Activated T-helper 1 cell treated with anti-CD3 and anti-CD28 coated beads, Interleukin-12 subunit alpha, Interleukin-12 subunit beta, Interleukin-2, Interleukin-4 antibody, amounts not matched to agents 30 ng/mL and 10 ng/mL and 1 ng/mL, durations not matched to agents 14 hours and 24 hours and 36 hours (primary cell): ENCODE measurements at regions of chr12 and their contacts with region 1.

Region 1: DNA sequence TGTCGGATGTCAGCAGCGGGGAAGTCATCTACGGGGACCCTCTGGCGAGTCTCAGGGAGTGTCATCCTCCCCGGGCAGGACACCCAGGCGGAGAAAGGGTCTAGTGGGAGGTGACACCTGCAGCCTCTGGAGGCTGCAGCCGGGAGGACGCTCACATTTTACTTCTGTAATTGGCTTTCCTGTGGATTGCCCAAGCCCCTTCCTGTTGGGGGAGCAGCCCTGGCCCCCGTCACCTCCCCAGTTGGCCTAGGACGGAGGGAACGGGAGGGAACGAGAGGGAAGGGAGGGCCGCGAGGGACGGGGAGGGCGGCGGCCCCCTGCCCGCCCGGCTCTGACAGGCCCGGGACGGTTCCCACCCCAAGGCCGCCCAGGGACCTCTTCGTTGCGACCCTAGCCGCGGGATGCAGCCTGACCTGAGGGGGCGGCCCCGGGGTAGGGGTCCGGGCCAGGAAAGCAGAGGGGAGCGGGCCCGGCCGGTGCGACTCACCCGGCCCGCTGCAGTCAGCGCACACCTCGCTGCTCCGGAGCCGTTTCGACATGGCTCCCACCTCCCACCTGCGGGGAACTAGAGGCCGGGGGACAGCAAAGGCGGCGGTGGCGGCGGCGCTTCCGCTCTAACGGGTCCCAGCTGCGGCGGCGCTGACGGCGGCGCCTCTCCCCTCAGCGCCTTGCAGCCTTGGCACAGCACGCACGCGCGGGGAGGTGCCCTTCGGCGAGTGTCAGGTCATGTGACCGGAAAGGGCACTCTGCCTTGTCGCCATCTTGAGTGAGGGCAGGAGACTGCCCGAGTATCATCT is at the start of gene GIT2:
- DNase-seq: peak; percentile 95
- H3K4me3 Mint-ChIP-seq: peak within 1 kb of the TSS; percentile 99
- H3K27ac Mint-ChIP-seq: peak within 1 kb of the TSS; percentile 96
- H3K4me1 Mint-ChIP-seq: peaks cover 72% of the 10 kb centered on the region
- H3K27me3 Mint-ChIP-seq: no peaks in the 10 kb centered on the region
- total RNA-seq, gene GIT2: 86.2 and 87.5 TPM in 2 replicates

Region 2: GRCh38 chr12:109880016-109880931 is 115.6 kb before region 1 on chr12 and contains the start of gene GLTP:
- intact Hi-C with region 1: loop called (anchors 1 kb)
- DNase-seq: peak; percentile 91
- H3K4me3 Mint-ChIP-seq: peak within 1 kb of the TSS; percentile 95
- H3K27ac Mint-ChIP-seq: peak within 1 kb of the TSS; percentile 87
- H3K4me1 Mint-ChIP-seq: peaks cover 29% of the 10 kb centered on the region
- H3K27me3 Mint-ChIP-seq: peaks cover 10% of the 10 kb centered on the region
- total RNA-seq, gene GLTP: 27.7 and 29.1 TPM in 2 replicates

Region 3: DNA sequence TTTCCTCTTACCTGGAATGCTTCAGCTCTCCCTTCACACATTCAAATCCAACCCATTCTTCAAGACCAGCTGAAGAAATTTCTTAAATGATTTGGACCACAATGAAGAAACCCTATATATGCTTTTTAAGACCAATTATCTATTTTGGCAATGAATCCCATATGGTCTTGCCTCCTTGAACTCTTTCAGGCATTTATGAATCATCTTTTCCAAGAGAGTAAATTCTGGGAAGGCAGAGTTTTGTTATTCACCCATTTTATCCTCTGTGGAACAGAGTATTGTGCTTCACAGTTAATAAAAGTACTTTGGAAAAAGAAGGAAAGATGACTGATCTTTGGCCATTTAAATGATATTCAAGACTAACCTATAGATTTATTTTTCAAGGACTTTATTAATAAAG is 13.7 kb before region 1 on chr12:
- intact Hi-C with region 1: loop called (anchors 1 kb)
- DNase-seq: no peak
- H3K4me3 Mint-ChIP-seq: peak overlapping the region; percentile 16
- H3K27ac Mint-ChIP-seq: peak overlapping the region; percentile 74
- H3K4me1 Mint-ChIP-seq: peaks cover 51% of the 10 kb centered on the region
- H3K27me3 Mint-ChIP-seq: no peaks in the 10 kb centered on the region

Region 4: DNA sequence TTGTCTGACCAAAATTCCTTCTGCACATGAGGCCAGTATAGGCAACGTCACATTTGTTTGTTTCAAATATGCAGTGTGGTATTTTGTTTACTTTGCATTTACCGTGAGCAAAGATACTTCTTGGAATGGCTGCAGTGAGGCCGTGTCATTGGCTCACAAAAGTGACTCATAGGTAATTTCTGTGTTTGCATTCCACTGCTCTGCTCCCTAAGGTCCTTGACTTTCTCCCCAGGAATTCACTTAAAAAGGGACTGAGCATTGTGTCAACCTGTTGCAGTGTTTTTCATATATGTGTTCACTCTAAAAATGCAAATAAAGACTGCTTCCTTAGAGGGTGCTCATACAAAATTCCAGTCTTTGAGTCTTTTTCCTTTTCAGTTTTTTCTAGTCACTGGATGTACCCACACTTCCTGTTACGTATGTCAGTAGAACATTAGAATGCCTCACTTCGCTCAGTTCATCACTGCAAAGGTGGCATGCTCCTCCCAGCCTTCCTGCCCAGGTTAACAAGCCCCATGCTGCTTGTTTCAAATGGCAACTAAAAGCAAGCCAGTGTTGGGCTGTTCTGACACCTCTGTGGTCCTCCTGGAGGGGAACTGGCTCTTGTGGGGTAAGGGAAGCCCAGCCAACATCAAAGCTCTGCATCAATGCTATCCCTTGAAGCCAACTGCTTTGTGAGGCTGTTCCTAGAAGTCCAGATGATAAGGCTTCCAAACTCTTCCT is 43.4 kb after region 1 on chr12:
- intact Hi-C with region 1: loop called (anchors 2 kb)
- DNase-seq: peak; percentile 34
- H3K4me3 Mint-ChIP-seq: peak overlapping the region; percentile 50
- H3K27ac Mint-ChIP-seq: peak overlapping the region; percentile 94
- H3K4me1 Mint-ChIP-seq: peaks cover 63% of the 10 kb centered on the region
- H3K27me3 Mint-ChIP-seq: no peaks in the 10 kb centered on the region

Region 5: DNA sequence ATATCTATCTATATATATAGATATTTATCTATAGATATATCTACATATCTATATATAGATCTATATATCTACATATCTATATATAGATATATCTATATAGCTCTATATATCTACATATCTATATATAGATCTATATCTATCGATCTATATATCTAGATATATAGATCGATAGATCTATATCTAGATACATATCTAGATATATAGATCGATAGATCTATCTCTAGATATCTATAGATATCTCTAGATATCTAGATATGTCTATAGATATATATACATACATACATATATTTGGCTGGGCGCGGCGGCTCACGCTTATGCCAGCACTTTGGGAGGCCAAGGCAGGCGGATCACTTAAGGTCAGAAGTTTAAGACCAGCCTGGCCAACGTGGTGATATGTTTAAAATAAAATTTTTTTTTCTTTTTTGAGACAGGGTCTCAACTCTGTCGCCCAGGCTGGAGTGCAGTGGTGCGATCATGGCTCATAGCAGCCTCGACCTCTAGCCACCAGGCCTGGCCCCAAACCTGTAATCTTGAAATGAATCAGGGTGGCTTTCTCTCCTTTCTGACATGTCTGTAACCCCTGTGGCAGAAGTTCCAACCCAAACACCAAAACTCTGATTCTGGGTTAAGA is 436.2 kb after region 1 on chr12:
- intact Hi-C with region 1: no loop called
- DNase-seq: no peak
- H3K4me3 Mint-ChIP-seq: no peak overlapping the region
- H3K27ac Mint-ChIP-seq: no peak overlapping the region
- H3K4me1 Mint-ChIP-seq: no peaks in the 10 kb centered on the region
- H3K27me3 Mint-ChIP-seq: peaks cover 4% of the 10 kb centered on the region